Lower leg skin (tissue), 4 donors: ENCODE measurements at regions of chr11 and their contacts with region 1.

Region 1: DNA sequence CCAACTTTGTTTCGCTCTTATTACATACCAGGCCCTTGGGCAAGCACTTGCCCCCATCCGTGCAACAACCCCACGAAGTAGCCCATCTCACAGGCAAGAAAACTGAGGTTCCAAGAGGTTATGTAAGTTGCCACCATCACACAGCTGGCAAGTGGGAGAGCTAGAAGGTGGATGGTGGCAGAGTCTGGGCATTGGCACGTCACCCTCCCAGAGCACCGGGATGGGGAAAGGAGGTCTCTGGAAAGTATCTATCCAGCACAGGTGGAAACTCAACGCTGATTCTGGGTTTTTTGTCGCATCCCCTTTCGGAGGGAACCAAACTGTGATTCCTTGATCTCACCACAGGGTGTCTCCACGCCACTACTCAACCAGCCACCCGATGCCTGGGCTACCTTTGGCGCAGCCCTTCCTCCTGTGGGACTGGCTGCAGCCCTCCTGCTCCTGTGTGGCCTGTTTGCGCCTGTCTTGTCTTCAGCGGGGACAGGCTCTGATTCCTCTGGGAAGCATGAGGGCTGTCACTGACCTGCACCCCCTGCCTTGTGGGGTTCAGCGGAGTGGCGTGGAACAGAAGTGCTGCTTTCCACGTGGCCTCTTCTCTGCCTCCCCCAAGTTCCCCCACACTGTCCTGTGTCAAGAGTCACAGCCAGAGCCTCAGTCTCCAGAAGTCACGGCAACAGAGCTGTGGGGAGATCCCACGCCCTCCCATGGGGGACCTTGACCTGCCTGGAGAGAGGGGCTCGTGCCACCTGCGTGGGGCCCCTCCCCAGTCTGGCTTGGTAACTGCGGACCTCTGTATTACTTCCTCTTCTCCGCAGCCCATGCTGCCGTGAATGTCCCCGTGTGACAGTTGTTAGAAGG is 34.4 kb upstream of the TRIM29 start:
- DNase-seq: peak; percentile 66 to 91
- H3K4me3 ChIP-seq: no peak overlapping the region
- CTCF ChIP-seq: peak in 1 of 3 donors; percentile 71
- POLR2A ChIP-seq: no peak

Region 2: GRCh38 chr11:120229451-120230424 is 57.5 kb after region 1 on chr11:
- intact Hi-C with region 1: loop called (anchors 5 kb)
- DNase-seq: no peak
- H3K4me3 ChIP-seq: no peak overlapping the region
- CTCF ChIP-seq: peak in 1 of 3 donors; percentile 47
- POLR2A ChIP-seq: no peak

Region 3: GRCh38 chr11:120303004-120303637 is 130.8 kb after region 1 on chr11:
- intact Hi-C with region 1: loop called (anchors 10 kb)
- DNase-seq: peak; percentile 78 to 92
- H3K4me3 ChIP-seq: no peak overlapping the region
- CTCF ChIP-seq: peak in 1 of 3 donors; percentile 58
- POLR2A ChIP-seq: no peak

Region 4: DNA sequence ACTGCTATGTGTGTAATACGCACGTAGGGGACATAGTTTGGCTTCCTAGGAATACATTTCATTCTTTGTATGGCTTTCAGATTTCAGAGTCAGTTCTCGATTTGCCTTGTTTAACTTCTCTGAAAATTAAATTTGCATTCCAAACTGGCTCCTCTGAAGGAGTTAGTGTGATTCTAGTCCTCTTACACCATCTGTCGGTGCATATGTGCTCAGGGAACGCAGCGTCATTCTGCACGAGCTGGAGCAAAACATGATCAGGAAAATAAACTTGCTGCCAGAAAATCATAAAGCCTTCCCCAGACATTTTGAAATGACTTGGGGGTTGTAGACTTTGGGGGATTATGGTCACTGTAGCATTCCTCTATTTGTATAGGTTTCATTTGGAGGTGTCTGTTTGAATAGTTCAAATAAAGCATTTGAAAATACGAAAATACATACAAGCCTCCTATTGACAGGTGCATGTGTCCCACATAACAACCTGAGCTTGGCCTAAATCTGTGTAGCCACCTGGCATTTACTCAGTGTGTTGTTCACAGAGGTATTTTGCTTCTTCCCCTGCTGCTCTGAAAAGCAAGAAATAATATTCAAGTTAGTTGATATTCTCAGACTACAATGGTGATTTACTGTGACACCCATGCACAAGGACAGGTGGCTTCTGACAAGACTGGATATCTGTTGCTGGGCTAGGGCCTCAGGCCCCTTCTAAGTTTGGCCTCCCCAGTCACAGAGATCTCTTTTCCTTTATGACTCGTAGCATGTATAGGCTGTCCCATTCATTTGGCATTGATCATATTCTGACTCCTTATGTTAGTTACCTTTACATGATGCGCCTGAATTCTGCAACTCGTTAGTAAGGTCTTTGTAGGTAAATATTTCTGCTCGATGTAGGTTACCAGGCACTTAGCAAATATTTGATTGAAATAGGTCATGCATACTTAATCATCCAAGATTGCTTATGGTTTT is 1362.1 kb after region 1 on chr11:
- intact Hi-C with region 1: no loop called
- DNase-seq: peak in 1 of 2 donors; percentile 16
- H3K4me3 ChIP-seq: no peak overlapping the region
- CTCF ChIP-seq: no peak
- POLR2A ChIP-seq: no peak